Posterior vena cava (tissue), 2 donors: ENCODE measurements at regions of chr1 and their contacts with region 1.

Region 1: GRCh38 chr1:40107290-40108262 is 10.5 kb upstream of the PPT1 start:
- DNase-seq: no peak

Region 2: DNA sequence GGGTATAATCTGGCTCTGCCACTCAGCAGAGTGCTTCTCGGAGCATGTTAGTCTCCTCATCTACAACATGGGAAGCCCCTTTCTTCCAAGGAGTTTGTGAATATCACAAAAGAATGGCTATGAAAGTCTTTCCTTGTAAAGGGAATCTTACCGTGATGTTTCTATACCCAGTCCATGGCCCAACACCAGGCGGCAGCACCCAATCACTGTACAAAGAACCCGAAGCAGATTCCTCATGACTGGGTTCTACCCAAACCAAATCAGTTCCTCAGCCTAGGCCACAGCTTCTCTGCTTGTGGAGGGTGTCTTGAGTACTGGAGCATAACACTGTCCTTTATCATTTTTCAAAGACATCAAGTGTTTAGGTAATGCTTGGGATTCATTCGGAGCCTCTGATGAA is 930.5 kb after region 1 on chr1:
- intact Hi-C with region 1: loop called in 1 of 2 experiments (anchors 5 kb)
- DNase-seq: no peak